ENCODE measurements at regions of chr9 and their contacts with region 1.

Region 1: DNA sequence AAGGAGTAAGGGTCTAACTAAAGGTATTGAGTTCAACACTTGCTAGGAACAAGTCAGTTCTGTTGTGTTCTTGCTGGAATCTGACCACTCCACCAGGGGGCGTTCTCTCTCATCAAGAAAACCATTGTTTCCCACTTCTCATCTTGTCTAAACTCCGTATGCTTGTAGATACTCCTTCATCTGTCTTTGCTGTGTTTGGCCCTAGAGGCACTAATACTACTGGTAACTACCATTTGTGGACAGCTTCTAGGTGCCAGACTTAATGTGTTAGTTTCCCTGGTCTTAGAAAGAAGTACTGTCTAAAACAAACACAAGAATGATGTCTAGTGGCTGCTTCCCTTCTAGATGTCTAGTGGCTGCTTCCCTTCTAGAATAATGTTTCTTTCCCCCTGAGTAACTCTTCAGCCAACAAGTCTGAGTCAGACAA is 18.7 kb upstream of the PTPDC1 start:
- DNase-seq: peak; percentile 90
- H3K4me3 ChIP-seq: no peak overlapping the region
- H3K27ac ChIP-seq: no peak overlapping the region
- H3K4me1 ChIP-seq: no peaks in the 10 kb centered on the region
- H3K27me3 ChIP-seq: no peaks in the 10 kb centered on the region
- CTCF ChIP-seq: peak; percentile 73 to 82 (median 73)
- POLR2A ChIP-seq: no peak

Region 2: DNA sequence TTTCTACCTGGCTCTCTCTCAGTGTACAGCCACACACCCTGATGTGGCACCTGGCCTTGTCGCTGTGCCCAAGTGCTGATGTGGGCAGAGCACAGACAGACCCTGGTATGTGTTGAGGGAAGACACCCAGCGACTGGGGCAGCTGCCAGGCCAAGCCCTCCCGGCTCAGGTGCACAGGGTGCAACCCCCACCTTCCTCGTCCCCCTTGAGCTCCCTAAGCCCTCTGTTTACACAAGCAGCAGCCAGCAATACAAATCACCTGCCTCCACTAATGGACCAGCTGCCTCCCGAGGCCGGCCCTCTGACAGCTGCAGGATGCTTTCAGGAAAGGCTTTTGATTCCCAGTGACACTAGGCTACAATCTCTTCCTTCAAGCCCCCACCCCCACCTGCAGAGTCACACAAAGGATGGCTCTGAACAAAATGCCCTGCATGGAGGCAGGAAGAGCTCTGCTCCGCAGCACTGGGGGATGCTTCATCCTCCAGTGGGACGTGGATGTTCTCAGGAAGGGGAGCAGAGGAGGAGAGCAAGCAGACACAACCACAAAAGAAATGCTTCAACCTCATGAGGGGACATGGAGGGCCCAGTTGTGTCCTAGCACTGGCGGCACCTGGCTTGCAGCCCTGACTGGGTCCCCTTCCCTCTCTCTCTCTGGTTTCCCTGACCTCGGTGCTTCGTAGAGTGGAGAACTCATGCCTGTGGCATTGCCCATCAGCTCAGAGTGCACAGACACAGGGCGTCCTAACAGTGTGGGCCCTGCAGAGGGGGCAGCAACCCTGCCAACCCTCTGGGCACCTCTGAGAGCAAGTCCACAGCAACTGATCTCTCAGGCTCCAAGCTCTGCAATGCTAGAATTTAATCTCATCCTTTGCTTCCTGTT is 251.2 kb before region 1 on chr9:
- intact Hi-C with region 1: no loop called
- DNase-seq: no peak
- H3K4me3 ChIP-seq: no peak overlapping the region
- H3K27ac ChIP-seq: no peak overlapping the region
- H3K4me1 ChIP-seq: no peaks in the 10 kb centered on the region
- H3K27me3 ChIP-seq: no peaks in the 10 kb centered on the region
- CTCF ChIP-seq: no peak
- POLR2A ChIP-seq: no peak

Region 3: GRCh38 chr9:94213511-94214124 is 148.1 kb after region 1 on chr9:
- intact Hi-C with region 1: loop called (anchors 10 kb)
- DNase-seq: peak; percentile 85
- H3K4me3 ChIP-seq: no peak overlapping the region
- H3K27ac ChIP-seq: no peak overlapping the region
- H3K4me1 ChIP-seq: no peaks in the 10 kb centered on the region
- H3K27me3 ChIP-seq: no peaks in the 10 kb centered on the region
- CTCF ChIP-seq: peak; percentile 83 to 86 (median 84)
- POLR2A ChIP-seq: no peak

Measured in testis (tissue), 5 donors.